ENCODE measurements at regions of chr11 and their contacts with region 1.

Region 1: GRCh38 chr11:69888483-69889076 is 69.4 kb upstream of the FGF3 start:
- DNase-seq: peak; percentile 61 to 78 (median 73)
- ATAC-seq: peak; percentile 27 to 50 (median 48)
- H3K4me3 ChIP-seq: no peak overlapping the region
- H3K27ac ChIP-seq: no peak overlapping the region
- H3K4me1 ChIP-seq: peaks cover 0 to 30% (median 12%) of the 10 kb centered on the region in 4 donors
- H3K27me3 ChIP-seq: no peaks in the 10 kb centered on the region
- CTCF ChIP-seq: peak; percentile 80 to 96 (median 93)
- POLR2A ChIP-seq: no peak

Region 2: GRCh38 chr11:69686452-69686851 is 202.1 kb before region 1 on chr11:
- intact Hi-C with region 1: loop called in 1 of 2 experiments (anchors 5 kb)
- DNase-seq: no peak
- ATAC-seq: no peak
- H3K4me3 ChIP-seq: no peak overlapping the region
- H3K27ac ChIP-seq: no peak overlapping the region
- H3K4me1 ChIP-seq: peaks cover 0 to 6% (median 0%) of the 10 kb centered on the region in 4 donors
- H3K27me3 ChIP-seq: no peaks in the 10 kb centered on the region
- CTCF ChIP-seq: no peak
- POLR2A ChIP-seq: no peak

Region 3: DNA sequence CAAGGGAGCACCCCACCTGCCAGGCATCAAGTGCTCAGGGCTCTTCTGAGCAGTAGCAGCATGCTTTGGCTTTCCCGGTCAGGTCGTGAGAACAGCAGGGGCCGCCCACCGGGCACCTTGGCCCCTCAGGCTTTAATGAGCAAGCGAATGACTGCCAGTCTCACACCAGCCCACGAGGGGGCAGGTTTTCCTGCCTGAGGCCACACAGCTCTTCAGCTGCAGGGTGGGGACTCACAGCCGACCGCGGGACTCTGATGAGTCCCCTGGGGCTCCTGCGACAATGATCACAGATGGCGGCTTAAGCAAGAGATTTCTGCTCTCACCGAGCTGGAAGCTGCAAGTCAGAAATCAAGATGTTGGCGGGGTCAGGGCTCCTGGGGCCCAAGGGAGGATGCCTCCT is 170.4 kb before region 1 on chr11:
- intact Hi-C with region 1: loop called (anchors 10 kb)
- DNase-seq: no peak
- ATAC-seq: peak in 3 of 4 donors; percentile 42 to 65 (median 55)
- H3K4me3 ChIP-seq: no peak overlapping the region
- H3K27ac ChIP-seq: no peak overlapping the region
- H3K4me1 ChIP-seq: no peaks in the 10 kb centered on the region
- H3K27me3 ChIP-seq: no peaks in the 10 kb centered on the region
- CTCF ChIP-seq: peak; percentile 32 to 56 (median 42)
- POLR2A ChIP-seq: no peak

Region 4: DNA sequence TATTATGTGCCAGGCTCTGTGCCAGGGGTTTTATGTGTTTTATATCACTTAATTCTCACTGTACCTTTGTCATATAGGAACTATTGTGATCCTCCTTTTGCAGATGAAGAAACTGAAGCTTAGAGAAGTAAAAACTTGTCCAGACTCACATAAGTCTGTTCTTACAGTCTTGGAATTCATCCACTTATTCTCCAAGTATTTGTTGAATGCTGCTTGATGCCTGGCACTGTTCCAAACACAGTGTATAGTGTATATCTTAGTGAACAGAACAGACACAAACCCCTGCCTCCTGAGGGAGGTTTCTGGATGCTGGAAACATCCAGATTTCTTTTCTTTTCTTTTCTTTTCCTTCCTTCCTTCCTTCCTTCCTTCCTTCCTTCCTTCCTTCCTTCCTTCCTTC is 40.4 kb before region 1 on chr11:
- intact Hi-C with region 1: no loop called
- DNase-seq: no peak
- ATAC-seq: no peak
- H3K4me3 ChIP-seq: no peak overlapping the region
- H3K27ac ChIP-seq: no peak overlapping the region
- H3K4me1 ChIP-seq: no peaks in the 10 kb centered on the region
- H3K27me3 ChIP-seq: no peaks in the 10 kb centered on the region
- CTCF ChIP-seq: no peak
- POLR2A ChIP-seq: no peak